Activated T-helper 1 cell treated with anti-CD3 and anti-CD28 coated beads, Interleukin-12 subunit alpha, Interleukin-12 subunit beta, Interleukin-2, Interleukin-4 antibody, amounts not matched to agents 30 ng/mL and 10 ng/mL and 1 ng/mL, durations not matched to agents 14 hours and 24 hours and 36 hours (primary cell): ENCODE measurements at regions of chr20 and their contacts with region 1.

Region 1: DNA sequence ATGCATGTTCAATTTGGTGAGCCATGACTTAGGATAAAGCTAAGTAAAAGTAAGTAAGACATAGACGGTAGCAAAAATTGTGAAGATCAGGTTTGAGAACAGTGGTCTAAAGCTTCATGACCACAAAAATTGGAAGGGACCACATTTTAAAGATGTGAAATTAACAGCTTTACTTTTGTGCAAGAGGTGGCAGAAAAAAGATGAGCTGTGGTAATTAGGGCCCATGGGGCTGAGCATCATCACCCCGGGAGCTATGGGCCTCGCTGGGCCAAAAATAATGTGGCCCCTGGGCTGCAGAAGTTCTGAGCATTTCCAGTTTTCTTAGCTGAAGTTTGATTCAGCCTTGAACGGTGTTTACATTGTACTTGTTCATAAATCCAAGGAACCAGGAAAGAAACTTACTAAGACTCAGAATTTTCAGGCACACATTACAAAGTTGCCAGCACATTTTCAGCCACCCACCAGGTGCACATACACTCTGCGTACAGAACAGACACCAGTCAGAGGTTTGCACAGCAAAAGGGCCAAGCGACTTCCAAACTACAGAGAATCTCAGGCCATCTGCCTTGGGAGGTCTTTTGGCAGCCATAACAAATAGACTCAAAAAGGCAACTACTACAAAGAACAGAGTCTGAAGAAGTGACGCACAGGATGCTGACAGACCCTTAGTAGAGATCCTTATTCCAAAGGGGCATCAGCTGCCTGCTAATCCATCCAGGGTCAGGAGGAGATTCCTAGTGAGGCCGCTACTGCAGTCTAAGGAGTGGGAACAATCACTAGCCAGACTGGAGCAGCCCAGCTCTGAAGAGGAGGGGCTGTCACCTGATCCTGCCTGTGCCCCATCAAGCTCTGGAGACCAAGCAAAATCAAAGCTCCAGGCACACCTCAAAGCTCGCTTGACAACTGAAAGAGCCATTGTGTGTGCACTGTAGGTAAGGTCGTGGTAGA is 57.8 kb downstream of the CSE1L start:
- DNase-seq: no peak
- H3K4me3 Mint-ChIP-seq: no peak overlapping the region
- H3K27ac Mint-ChIP-seq: no peak overlapping the region
- H3K4me1 Mint-ChIP-seq: peaks cover 19% of the 10 kb centered on the region
- H3K27me3 Mint-ChIP-seq: no peaks in the 10 kb centered on the region

Region 2: DNA sequence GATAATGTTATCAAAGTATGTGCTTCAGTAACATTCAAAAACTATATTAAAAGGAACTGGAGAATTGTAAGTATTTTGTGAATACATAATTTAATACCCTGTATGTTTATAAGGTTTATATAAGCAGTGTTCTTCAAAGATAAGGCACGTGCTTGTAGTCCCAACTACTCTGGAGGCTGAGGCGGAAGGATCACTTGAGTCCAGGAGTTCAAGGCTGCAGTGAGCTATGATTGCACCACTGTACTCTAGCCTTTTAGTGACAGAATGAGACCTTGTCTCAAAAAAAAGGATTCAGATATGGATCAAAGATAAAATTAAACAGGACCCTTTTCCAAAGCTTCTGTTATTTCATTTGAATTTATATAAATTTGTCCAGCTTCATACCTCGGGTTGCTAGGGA is 40.6 kb before region 1 on chr20:
- intact Hi-C with region 1: loop called (anchors 1 kb)
- DNase-seq: no peak
- H3K4me3 Mint-ChIP-seq: no peak overlapping the region
- H3K27ac Mint-ChIP-seq: no peak overlapping the region
- H3K4me1 Mint-ChIP-seq: peaks cover 8% of the 10 kb centered on the region
- H3K27me3 Mint-ChIP-seq: no peaks in the 10 kb centered on the region

Region 3: GRCh38 chr20:50003253-50003656 is 899.3 kb after region 1 on chr20:
- intact Hi-C with region 1: no loop called
- DNase-seq: no peak
- H3K4me3 Mint-ChIP-seq: no peak overlapping the region
- H3K27ac Mint-ChIP-seq: peak overlapping the region; percentile 3
- H3K4me1 Mint-ChIP-seq: peaks cover 16% of the 10 kb centered on the region
- H3K27me3 Mint-ChIP-seq: peaks cover 6% of the 10 kb centered on the region